Psoas muscle (tissue), 8 donors: ENCODE measurements at regions of chr11 and their contacts with region 1.

Region 1: GRCh38 chr11:8309862-8310261 is 46.2 kb upstream of the LMO1 start:
- DNase-seq: peak in 1 of 2 donors; percentile 36
- ATAC-seq: peak; percentile 52 to 73 (median 68)
- H3K4me3 ChIP-seq: no peak overlapping the region
- H3K27ac ChIP-seq: no peak overlapping the region
- H3K4me1 ChIP-seq: no peaks in the 10 kb centered on the region
- H3K27me3 ChIP-seq: no peaks in the 10 kb centered on the region
- CTCF ChIP-seq: peak; percentile 44

Region 2: GRCh38 chr11:8149726-8150125 is 160.1 kb before region 1 on chr11:
- intact Hi-C with region 1: no loop called
- DNase-seq: no peak
- ATAC-seq: no peak
- H3K4me3 ChIP-seq: no peak overlapping the region
- H3K27ac ChIP-seq: no peak overlapping the region
- H3K4me1 ChIP-seq: peaks cover 4% of the 10 kb centered on the region
- H3K27me3 ChIP-seq: no peaks in the 10 kb centered on the region
- CTCF ChIP-seq: no peak

Region 3: DNA sequence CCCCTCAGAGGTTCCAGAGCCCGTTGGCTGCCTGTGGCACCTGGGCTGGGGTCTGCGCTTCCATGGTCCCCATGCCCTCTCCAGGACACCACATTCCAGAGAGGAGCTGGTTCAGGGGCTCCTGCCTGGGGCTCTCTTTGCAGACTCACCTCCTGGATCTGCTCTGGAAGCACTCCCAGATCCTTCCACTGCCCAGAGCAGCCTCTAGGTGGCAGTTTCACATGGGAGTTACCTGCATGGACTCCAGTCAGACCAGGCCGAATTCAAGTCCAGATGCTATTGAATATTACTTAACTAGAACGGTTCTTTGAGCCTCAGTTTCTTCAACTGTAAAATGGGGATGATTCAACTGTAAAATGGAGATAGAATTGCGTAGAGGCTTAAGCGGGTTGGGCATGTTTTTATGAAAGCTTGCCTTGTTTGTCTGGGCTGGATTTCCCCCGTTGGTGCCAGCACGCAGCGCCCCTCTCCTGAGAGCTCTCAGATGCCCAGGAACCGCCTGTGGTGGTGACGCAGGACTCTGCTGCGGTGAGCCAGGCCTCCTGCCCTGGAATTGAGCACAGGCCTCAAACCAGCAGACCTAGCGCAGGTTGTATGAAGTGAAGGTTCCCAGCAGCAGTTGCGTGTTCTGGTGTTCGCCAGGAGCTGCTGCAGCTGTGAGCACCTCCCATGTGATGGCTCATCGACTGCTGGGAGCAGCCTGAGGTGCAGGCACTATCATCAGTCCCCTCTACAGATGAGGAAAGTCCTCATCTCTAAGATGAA is 90.4 kb before region 1 on chr11:
- intact Hi-C with region 1: loop called in 1 of 2 experiments (anchors 5 kb)
- DNase-seq: no peak
- ATAC-seq: peak; percentile 49 to 77 (median 61)
- H3K4me3 ChIP-seq: no peak overlapping the region
- H3K27ac ChIP-seq: no peak overlapping the region
- H3K4me1 ChIP-seq: no peaks in the 10 kb centered on the region
- H3K27me3 ChIP-seq: peaks cover 0 to 3% (median 0%) of the 10 kb centered on the region in 3 donors
- CTCF ChIP-seq: peak; percentile 50

Region 4: DNA sequence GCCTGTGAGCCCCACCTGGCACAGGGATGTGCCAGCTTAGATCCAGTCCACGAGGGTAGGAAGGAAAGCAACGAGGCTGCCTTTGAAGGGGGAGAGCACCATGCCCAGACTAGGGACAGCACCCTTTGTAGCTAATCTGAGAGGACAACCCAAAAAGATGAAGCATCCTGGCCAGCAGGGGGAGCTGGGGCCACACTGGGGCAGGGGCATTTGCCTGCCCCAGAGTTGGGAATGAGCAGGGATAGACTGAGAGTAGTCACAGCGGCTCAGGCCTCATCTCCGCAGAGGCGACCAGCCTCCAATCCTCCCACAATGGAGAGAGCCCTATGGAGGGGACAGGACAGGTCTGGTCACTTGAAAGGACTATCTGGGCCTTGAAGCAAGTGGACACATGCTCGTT is 62.5 kb before region 1 on chr11:
- intact Hi-C with region 1: loop called in 1 of 2 experiments (anchors 1 kb)
- DNase-seq: peak in 1 of 2 donors; percentile 77
- ATAC-seq: peak; percentile 79 to 91 (median 86)
- H3K4me3 ChIP-seq: no peak overlapping the region
- H3K27ac ChIP-seq: no peak overlapping the region
- H3K4me1 ChIP-seq: no peaks in the 10 kb centered on the region
- H3K27me3 ChIP-seq: no peaks in the 10 kb centered on the region
- CTCF ChIP-seq: peak; percentile 69

Region 5: DNA sequence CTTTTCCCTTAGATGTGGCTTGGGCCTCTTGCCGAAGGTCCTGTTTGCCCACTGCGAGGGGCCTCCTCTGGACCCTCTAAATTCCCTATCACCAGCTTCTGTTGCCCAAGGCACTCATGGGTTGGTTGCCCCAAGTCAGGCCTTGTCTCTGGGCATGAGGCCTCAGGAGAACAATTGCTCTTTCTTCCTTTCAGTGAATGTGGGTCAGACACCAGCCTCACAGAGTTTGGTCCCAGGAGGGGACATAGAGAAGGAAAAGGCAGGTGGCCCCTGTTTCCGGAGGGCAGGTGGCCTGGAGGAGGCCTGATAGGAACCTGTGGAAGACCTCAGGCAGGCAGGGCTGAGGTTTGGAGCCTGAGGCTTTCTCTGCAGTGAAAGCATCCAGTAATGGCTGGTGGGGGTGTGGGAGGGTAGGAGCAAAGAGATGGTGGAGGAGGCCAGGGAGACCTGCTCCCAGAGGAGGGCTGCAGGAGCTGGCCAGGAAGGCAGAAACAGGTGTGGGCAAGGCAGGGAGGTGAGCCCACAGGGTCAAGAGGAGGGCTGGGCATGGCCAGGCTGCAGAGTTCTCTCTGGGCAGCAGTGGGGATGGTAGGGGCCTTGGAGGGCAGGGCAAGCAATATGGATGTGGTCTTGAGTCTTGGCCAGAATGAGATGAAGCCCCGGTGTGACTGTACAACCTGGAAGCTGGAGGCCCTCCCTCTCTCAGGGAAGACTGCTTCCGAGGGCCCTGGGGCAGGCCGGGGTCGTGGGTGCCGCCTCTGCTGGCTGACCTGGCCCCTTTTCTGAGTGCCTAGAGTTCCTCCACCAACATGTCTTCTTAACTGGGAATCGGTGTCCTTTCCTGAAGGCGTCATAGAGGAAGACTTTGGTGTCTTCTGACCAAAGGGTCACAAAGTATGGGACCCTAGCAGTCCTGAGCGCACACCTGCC is 18.2 kb before region 1 on chr11:
- intact Hi-C with region 1: no loop called
- DNase-seq: no peak
- ATAC-seq: no peak
- H3K4me3 ChIP-seq: no peak overlapping the region
- H3K27ac ChIP-seq: no peak overlapping the region
- H3K4me1 ChIP-seq: no peaks in the 10 kb centered on the region
- H3K27me3 ChIP-seq: peaks cover 0 to 1% (median 0%) of the 10 kb centered on the region in 3 donors
- CTCF ChIP-seq: no peak

Region 6: GRCh38 chr11:8365216-8365941 is 55.5 kb after region 1 on chr11:
- intact Hi-C with region 1: no loop called
- DNase-seq: no peak
- ATAC-seq: no peak
- H3K4me3 ChIP-seq: no peak overlapping the region
- H3K27ac ChIP-seq: no peak overlapping the region
- H3K4me1 ChIP-seq: no peaks in the 10 kb centered on the region
- H3K27me3 ChIP-seq: no peaks in the 10 kb centered on the region
- CTCF ChIP-seq: no peak